MCF 10A (cell line): ENCODE measurements at regions of chr7 and their contacts with region 1.

Region 1: GRCh38 chr7:111730476-111731300 is 168.4 kb upstream of the IMMP2L start:
- DNase-seq: peak; percentile 53
- H3K4me3 Mint-ChIP-seq: no peak overlapping the region
- H3K27ac Mint-ChIP-seq: peak overlapping the region; percentile 9
- H3K4me1 Mint-ChIP-seq: no peaks in the 10 kb centered on the region
- H3K27me3 Mint-ChIP-seq: no peaks in the 10 kb centered on the region
- CTCF ChIP-seq: peak; percentile 44

Region 2: GRCh38 chr7:111499037-111499655 is 231.5 kb before region 1 on chr7:
- CTCF ChIA-PET with region 1: interaction called, 10 read pairs
- POLR2A ChIA-PET with region 1: no interaction called
- intact Hi-C with region 1: no loop called
- DNase-seq: peak; percentile 91
- H3K4me3 Mint-ChIP-seq: no peak overlapping the region
- H3K27ac Mint-ChIP-seq: no peak overlapping the region
- H3K4me1 Mint-ChIP-seq: peaks cover 11% of the 10 kb centered on the region
- H3K27me3 Mint-ChIP-seq: no peaks in the 10 kb centered on the region
- CTCF ChIP-seq: no peak

Region 3: DNA sequence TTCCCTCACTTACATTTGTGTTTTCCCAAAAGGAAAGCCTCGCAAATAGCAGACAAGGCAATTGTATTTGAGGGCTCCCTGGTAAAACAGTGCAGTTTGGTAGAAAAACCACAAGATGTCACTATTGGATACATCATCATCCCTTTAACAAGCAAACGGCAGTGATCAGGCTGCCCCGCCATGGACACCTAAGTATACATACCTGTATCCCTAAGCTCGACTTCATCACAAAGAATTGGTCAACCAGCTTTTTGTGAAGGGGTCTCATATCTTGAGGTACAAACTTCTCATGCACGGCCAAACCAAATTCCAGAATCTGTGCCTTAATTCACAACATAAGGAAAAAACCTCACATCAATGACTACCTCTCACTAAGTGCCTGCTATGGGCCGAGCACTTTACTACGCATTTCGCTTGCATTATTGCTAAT is 11.1 kb after region 1 on chr7:
- CTCF ChIA-PET with region 1: interaction called, 33 read pairs
- POLR2A ChIA-PET with region 1: no interaction called
- intact Hi-C with region 1: no loop called
- DNase-seq: peak; percentile 78
- H3K4me3 Mint-ChIP-seq: no peak overlapping the region
- H3K27ac Mint-ChIP-seq: no peak overlapping the region
- H3K4me1 Mint-ChIP-seq: no peaks in the 10 kb centered on the region
- H3K27me3 Mint-ChIP-seq: no peaks in the 10 kb centered on the region
- CTCF ChIP-seq: peak; percentile 64

Region 4: GRCh38 chr7:112069879-112070321 is 339.2 kb after region 1 on chr7:
- CTCF ChIA-PET with region 1: no interaction called
- POLR2A ChIA-PET with region 1: no interaction called
- intact Hi-C with region 1: no loop called
- DNase-seq: peak; percentile 12
- H3K4me3 Mint-ChIP-seq: no peak overlapping the region
- H3K27ac Mint-ChIP-seq: no peak overlapping the region
- H3K4me1 Mint-ChIP-seq: peaks cover 21% of the 10 kb centered on the region
- H3K27me3 Mint-ChIP-seq: no peaks in the 10 kb centered on the region
- CTCF ChIP-seq: no peak

Region 5: GRCh38 chr7:112306903-112307302 is 576.2 kb after region 1 on chr7:
- CTCF ChIA-PET with region 1: no interaction called
- POLR2A ChIA-PET with region 1: no interaction called
- intact Hi-C with region 1: no loop called
- DNase-seq: no peak
- H3K4me3 Mint-ChIP-seq: no peak overlapping the region
- H3K27ac Mint-ChIP-seq: no peak overlapping the region
- H3K4me1 Mint-ChIP-seq: no peaks in the 10 kb centered on the region
- H3K27me3 Mint-ChIP-seq: no peaks in the 10 kb centered on the region
- CTCF ChIP-seq: no peak